RWPE1 (cell line): ENCODE measurements at regions of chr3 and their contacts with region 1.

Region 1: DNA sequence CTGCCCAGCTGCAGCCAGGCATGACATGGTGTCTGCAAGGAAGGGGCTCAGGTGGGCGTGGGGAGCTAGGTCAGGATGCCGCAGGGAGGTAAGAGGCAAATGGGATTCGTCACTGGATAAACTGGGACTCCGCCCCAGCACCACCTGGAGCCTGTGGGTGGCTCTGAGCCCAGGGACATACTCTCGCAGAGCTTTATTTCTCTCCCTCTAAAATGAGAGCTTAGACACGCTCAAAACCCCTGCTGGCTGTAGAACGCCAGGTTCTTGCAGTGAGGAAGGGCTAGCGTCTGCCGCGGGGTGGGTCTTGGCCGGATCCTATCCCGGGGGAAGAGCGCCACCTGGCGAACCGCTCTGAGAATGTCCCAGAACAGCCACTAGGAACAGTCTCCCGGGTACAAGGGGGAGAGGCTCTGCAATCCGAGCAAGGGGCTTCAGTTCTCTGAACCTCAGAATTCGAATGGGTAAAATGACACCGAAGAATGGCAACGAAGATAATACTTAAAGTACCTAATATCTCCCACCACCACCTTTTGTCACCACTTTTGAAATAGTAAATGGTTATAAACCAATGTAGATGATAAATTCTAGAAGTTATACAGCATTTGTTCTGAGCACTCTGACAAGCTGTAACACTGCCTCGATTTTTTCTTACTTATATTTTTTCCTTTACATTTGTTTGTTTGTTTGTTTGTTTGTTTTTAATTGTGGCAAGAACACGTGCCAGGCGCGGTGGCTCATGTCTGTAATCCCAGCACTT is 53.2 kb upstream of the SRGAP3 start:
- DNase-seq: peak; percentile 78
- H3K27ac ChIP-seq: peak overlapping the region; percentile 49
- CTCF ChIP-seq: peak; percentile 88

Region 2: DNA sequence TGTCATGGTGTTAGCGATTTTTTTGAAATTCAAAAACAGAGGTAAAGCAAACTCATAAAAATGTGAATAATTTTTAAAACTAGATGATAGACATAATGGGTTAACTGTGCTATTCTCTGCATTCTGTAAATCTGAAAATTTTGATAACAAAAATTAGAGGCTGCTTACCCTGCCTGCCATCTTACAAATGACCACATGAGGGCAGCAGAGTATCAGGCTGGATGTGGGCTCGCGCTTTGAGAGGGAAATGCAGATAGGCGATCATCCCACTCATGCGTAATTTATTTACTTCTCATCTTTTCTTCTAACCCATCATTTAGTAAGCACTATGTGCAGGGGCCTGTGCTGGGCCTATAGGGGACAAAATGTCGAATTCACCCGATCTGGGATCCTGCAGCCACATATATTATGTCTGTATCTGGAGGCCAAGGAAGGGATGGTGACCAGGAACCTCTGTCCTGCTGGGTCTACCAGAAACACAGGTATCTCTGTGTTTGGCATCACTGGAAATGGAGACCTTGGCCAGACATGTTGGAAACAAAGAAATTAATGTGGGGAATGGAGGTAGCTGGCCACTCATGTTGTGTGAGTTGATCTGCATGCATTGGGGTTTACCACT is 331.5 kb before region 1 on chr3:
- CTCF ChIA-PET with region 1: interaction called, 11 read pairs
- POLR2A ChIA-PET with region 1: no interaction called
- DNase-seq: peak; percentile 63
- H3K27ac ChIP-seq: no peak overlapping the region
- CTCF ChIP-seq: peak; percentile 98

Region 3: DNA sequence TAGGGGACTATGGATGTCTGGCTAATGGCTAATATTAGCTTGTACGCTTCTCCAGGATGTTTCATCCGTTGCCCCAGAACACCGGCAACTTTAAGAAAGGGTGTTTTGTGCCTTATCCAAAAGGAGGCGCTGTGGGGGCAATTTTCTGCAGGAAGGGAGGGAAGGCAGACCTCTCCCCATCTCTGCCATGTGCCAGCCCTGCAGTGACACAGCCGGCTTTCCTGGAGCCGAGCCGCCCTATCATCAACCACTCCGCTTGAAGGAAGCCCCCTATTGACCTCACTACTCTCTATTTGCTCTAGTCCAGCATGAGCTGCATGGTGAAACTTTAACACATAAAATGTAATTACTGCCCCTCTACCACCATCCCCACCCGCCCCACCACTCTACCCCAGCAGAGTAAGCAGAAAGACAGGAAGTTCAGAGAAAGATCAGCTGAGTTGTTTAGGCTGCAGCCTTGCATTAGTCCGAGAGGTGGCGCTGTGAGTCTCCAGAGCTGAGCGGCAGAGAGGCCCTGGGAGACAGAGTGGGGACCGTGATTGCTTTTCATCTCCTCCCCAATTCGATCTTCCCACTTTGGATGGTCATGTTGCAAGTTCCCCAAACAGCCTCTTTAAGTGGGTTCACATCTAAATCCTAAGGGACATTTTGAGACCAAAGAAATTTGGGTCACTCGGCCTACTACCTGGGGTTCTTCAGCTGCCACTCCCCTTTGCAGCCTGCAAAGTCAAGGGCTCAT is 314.8 kb before region 1 on chr3:
- CTCF ChIA-PET with region 1: interaction called, 16 read pairs
- POLR2A ChIA-PET with region 1: no interaction called
- DNase-seq: peak; percentile 55
- H3K27ac ChIP-seq: no peak overlapping the region
- CTCF ChIP-seq: peak; percentile 81

Region 4: DNA sequence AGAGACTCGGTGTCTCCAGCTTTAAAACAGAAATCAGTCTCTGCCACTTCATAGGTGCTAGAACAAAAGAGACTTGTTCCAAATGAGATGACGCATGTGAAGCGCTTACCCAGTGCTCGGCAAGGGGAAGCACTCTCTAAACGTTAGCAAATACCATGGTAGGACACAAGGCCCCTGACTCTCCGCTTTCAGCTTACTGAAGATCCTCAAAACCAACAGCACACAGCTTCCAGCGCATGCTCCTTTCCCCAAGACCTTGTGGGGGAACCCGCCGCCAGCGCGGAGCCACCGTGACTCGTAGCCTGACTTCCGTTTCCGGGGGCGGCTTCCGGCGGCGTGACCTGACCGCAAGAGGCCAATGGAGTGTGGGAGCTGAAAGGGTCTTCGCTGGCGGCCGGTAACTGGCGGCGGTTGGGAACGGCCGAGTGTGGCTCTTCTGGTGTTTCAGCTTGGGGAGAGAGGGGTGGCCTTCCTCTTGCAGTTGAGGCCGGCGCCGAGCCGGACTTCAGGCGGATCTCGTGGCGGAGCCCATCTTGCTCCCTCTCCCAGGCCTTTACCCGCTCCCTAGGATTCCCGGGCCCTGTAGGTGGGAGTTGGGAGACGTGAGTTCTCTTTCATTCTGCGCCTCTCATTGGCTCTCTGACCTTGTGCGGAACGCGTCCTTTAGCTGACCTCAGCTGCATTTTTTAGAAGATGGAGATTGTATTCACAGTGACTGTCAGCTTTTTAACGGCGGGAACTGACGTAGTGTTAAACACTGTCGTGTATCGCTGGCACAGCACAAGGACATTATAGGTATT is 60.3 kb after region 1 on chr3 and contains the start of gene THUMPD3:
- CTCF ChIA-PET with region 1: no interaction called
- POLR2A ChIA-PET with region 1: no interaction called
- DNase-seq: peak; percentile 72
- H3K27ac ChIP-seq: peak within 1 kb of the TSS; percentile 88
- CTCF ChIP-seq: no peak